SK-N-SH (cell line): ENCODE measurements at regions of chr1 and their contacts with region 1.

Region 1: GRCh38 chr1:31617917-31618660 is 600 bp downstream of the HCRTR1 start:
- DNase-seq: peak; percentile 94
- H3K4me3 ChIP-seq: peak overlapping the region; percentile 58 to 68
- H3K27ac ChIP-seq: no peak overlapping the region; a peak in 1 of 4 replicates
- H3K4me1 ChIP-seq: peaks cover 0 to 24% of the 10 kb centered on the region in 2 experiments; a peak in 1 of 4 replicates
- H3K27me3 ChIP-seq: no peaks in the 10 kb centered on the region
- CTCF ChIP-seq: peak; percentile 83
- EP300 ChIP-seq: no peak
- RAD21 ChIP-seq: peak; percentile 56

Region 2: GRCh38 chr1:31576201-31576669 is 41.9 kb before region 1 on chr1 and contains the start of gene TINAGL1:
- CTCF ChIA-PET with region 1: interaction called, 24 read pairs
- POLR2A ChIA-PET with region 1: no interaction called
- DNase-seq: no peak
- H3K4me3 ChIP-seq: no peak within 1 kb of the TSS
- H3K27ac ChIP-seq: no peak within 1 kb of the TSS
- H3K4me1 ChIP-seq: peaks cover 14 to 17% of the 10 kb centered on the region in 2 experiments; a peak in 3 of 4 replicates
- H3K27me3 ChIP-seq: no peaks in the 10 kb centered on the region
- CTCF ChIP-seq: no peak
- EP300 ChIP-seq: no peak
- RAD21 ChIP-seq: no peak
- polyA plus RNA-seq, gene TINAGL1: 0.23 TPM in 1 of 2 replicates, not detected in the other

Region 3: GRCh38 chr1:31593770-31594632 is 24.1 kb before region 1 on chr1:
- CTCF ChIA-PET with region 1: interaction called, 37 read pairs
- POLR2A ChIA-PET with region 1: no interaction called
- DNase-seq: peak; percentile 76
- H3K4me3 ChIP-seq: peak overlapping the region in 1 of 2 experiments; percentile 0; a peak in 1 of 4 replicates
- H3K27ac ChIP-seq: no peak overlapping the region
- H3K4me1 ChIP-seq: peaks cover 9 to 10% of the 10 kb centered on the region in 2 experiments
- H3K27me3 ChIP-seq: no peaks in the 10 kb centered on the region
- CTCF ChIP-seq: peak; percentile 90
- EP300 ChIP-seq: no peak
- RAD21 ChIP-seq: peak; percentile 72

Region 4: GRCh38 chr1:31633053-31633452 is 15.0 kb after region 1 on chr1:
- CTCF ChIA-PET with region 1: interaction called, 51 read pairs
- POLR2A ChIA-PET with region 1: no interaction called
- DNase-seq: no peak
- H3K4me3 ChIP-seq: no peak overlapping the region
- H3K27ac ChIP-seq: no peak overlapping the region
- H3K4me1 ChIP-seq: peaks cover 0 to 38% of the 10 kb centered on the region in 2 experiments; a peak in 3 of 4 replicates
- H3K27me3 ChIP-seq: no peaks in the 10 kb centered on the region
- CTCF ChIP-seq: peak; percentile 53
- EP300 ChIP-seq: no peak
- RAD21 ChIP-seq: no peak

Region 5: GRCh38 chr1:31644560-31645273 is 26.6 kb after region 1 on chr1 and contains the start of gene PEF1:
- CTCF ChIA-PET with region 1: interaction called, 45 read pairs
- POLR2A ChIA-PET with region 1: no interaction called
- DNase-seq: peak; percentile 98
- H3K4me3 ChIP-seq: peak within 1 kb of the TSS; percentile 68 to 96
- H3K27ac ChIP-seq: peak within 1 kb of the TSS; percentile 92 to 99
- H3K4me1 ChIP-seq: peaks cover 9 to 21% of the 10 kb centered on the region in 2 experiments; a peak in 3 of 4 replicates
- H3K27me3 ChIP-seq: no peaks in the 10 kb centered on the region
- CTCF ChIP-seq: no peak
- EP300 ChIP-seq: no peak
- RAD21 ChIP-seq: no peak
- polyA plus RNA-seq, gene PEF1: 51.9 and 63.4 TPM in 2 replicates